Natural killer cell (primary cell): ENCODE measurements at regions of chr7 and their contacts with region 1.

Region 1: DNA sequence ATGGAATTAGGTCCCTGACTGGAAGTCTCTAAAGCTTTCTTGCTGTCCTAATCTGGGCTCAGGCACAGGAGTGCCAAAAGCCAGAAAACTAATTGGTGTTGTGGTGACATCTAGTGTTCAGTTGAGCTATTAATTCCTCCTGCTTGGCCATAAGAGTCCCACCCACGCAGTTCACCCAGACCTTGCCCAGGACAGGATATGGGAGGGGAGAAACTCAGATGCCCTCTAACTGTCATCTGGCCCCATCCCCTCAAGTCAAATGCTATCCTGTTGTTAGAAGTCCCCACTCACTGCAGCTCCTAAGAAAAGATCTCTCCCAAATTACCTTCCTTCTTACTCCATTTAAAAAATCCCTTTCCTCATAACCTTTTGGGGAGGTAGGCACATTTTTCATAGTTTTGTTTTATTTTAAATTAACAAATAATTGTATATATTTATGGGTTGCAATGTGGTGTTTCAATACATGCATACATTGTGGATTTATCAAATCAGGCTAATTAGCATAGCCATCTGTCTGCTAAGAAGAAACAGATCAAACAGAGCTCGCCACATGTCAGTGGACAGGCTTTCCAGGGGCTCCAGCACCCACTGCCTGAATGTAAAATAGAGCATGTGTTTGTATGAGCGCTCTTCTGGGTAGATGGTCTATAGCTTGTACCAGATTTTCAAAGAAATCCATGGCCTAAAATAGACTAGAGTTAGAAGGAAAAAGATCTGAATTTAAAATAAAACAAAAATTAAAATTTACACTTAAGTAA is 84.0 kb downstream of the GSAP start:
- DNase-seq: peak in 1 of 2 donors; percentile 81
- ATAC-seq: peak; percentile 66 to 88 (median 87)
- H3K4me3 ChIP-seq: no peak overlapping the region
- H3K4me3 Mint-ChIP-seq: peak overlapping the region; percentile 79
- H3K27ac ChIP-seq: no peak overlapping the region
- H3K27ac Mint-ChIP-seq: peak overlapping the region; percentile 97
- H3K4me1 ChIP-seq: peaks cover 56% of the 10 kb centered on the region
- H3K4me1 Mint-ChIP-seq: peaks cover 69 to 81% of the 10 kb centered on the region in 2 donors
- H3K27me3 ChIP-seq: no peaks in the 10 kb centered on the region
- H3K27me3 Mint-ChIP-seq: no peaks in the 10 kb centered on the region
- CTCF ChIP-seq: peak; percentile 73

Region 2: DNA sequence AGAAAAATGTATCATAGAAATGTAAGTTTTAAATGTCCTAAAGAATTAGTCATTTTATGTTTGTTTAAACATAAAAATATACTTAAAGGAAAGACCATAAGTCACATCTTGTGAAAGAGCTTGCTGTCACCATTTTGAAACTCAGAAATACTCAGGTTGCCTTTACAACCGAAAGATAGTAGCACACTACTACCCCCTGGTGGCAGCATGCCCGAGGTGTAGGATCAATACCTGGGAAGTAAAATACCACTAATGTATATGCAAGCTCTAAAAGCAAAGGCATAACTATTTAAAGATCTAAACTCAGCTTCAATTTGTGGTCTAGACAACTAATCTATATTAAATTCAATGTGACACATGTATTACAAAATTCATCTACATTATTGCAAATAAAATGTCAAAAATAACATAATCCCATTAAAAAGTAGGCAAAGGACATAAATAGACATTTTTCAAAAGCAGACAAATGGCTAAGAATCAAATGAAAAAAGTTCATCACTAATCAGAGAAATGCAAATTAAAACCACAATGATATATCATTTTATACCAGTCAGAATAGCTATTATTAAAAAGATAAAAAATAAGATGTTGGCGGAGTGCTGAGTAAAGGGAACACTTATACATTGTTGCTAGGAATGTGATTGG is 84.8 kb before region 1 on chr7:
- intact Hi-C with region 1: loop called (anchors 10 kb)
- DNase-seq: peak; percentile 69 to 93
- ATAC-seq: peak; percentile 84 to 99 (median 98)
- H3K4me3 ChIP-seq: no peak overlapping the region
- H3K4me3 Mint-ChIP-seq: no peak overlapping the region
- H3K27ac ChIP-seq: no peak overlapping the region
- H3K27ac Mint-ChIP-seq: no peak overlapping the region
- H3K4me1 ChIP-seq: no peaks in the 10 kb centered on the region
- H3K4me1 Mint-ChIP-seq: peaks cover 0 to 4% of the 10 kb centered on the region in 2 donors
- H3K27me3 ChIP-seq: no peaks in the 10 kb centered on the region
- H3K27me3 Mint-ChIP-seq: no peaks in the 10 kb centered on the region
- CTCF ChIP-seq: peak; percentile 98